Caco-2 (cell line): ENCODE measurements at regions of chr6 and their contacts with region 1.

Region 1: GRCh38 chr6:125314019-125314581 is 12.3 kb upstream of the HDDC2 start:
- DNase-seq: peak; percentile 50 to 59
- H3K4me3 ChIP-seq: no peak overlapping the region
- H3K4me3 Mint-ChIP-seq: no peak overlapping the region
- H3K27ac Mint-ChIP-seq: no peak overlapping the region
- H3K4me1 ChIP-seq: 0 out of 2 replicates have a peak, but pooled peaks cover 5% of the 10 kb centered on the region
- H3K4me1 Mint-ChIP-seq: no peaks in the 10 kb centered on the region
- H3K27me3 ChIP-seq: no peaks in the 10 kb centered on the region
- H3K27me3 Mint-ChIP-seq: peaks cover 3% of the 10 kb centered on the region
- CTCF ChIP-seq: peak; percentile 68 to 86

Region 2: DNA sequence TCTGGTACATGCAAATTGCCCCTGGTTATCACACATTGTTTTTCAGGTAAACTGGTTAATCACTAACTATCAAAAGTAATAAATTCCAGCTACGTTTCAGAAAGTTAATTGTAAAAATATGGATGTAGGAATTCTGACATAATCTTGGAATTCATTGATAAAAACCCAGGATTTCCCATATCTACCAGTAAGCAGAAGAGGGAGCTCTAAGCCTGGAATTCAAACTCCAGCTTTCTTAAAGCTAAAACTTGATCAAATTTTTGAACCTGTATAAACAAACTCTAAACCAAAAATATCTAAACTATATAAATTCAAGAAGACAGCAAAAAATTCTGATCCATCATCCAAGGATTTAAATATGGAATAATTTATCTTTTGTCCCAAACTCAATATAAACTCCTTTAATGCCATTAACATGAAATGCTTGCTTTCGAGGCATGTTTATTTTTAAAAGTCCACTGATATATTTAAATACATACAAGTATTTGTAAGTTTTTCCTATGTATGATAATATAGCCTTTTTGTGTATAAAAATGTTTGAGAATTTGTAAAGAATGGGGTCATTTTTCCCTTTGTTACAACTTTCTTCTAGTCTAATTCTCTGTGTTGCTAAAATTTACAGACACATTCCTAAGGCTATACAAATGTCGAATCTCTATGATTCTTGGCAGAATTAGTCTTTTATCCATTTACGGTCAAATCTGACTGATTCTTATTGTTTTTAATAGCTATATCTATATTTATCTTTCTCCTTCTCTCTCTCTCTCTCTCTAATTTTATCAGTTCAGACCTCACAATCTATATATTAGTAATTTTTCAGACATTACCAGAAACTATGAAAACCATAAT is 443.3 kb before region 1 on chr6:
- CTCF ChIA-PET with region 1: no interaction called
- POLR2A ChIA-PET with region 1: no interaction called
- intact Hi-C with region 1: loop called (anchors 5 kb)
- DNase-seq: peak in 1 of 2 experiments; percentile 3
- H3K4me3 ChIP-seq: no peak overlapping the region
- H3K4me3 Mint-ChIP-seq: no peak overlapping the region
- H3K27ac Mint-ChIP-seq: no peak overlapping the region
- H3K4me1 ChIP-seq: no peaks in the 10 kb centered on the region
- H3K4me1 Mint-ChIP-seq: no peaks in the 10 kb centered on the region
- H3K27me3 ChIP-seq: no peaks in the 10 kb centered on the region
- H3K27me3 Mint-ChIP-seq: peaks cover 4% of the 10 kb centered on the region
- CTCF ChIP-seq: peak; percentile 50 to 54

Region 3: DNA sequence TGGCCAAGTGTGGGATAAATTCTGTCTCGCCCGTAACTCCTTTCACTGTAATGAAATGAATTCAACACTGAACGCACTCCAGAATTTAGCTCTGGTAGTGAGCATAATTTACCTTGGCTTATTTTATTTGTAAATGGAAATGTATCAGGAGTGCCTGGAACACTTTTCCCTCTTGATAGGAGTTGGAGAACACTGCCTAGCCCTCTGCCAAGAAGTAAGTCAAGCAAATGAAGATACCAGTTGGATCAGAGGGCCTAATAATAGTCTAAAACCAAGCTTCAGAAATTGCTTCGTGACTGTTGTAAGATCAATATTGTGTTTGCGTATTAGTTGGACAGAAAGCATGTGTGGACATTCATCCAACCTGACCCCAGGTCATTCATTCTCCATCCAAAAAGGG is 225.1 kb before region 1 on chr6:
- CTCF ChIA-PET with region 1: no interaction called
- POLR2A ChIA-PET with region 1: no interaction called
- intact Hi-C with region 1: no loop called
- DNase-seq: no peak
- H3K4me3 ChIP-seq: no peak overlapping the region
- H3K4me3 Mint-ChIP-seq: no peak overlapping the region
- H3K27ac Mint-ChIP-seq: no peak overlapping the region
- H3K4me1 ChIP-seq: no peaks in the 10 kb centered on the region
- H3K4me1 Mint-ChIP-seq: no peaks in the 10 kb centered on the region
- H3K27me3 ChIP-seq: no peaks in the 10 kb centered on the region
- H3K27me3 Mint-ChIP-seq: peaks cover 10% of the 10 kb centered on the region
- CTCF ChIP-seq: no peak

Region 4: DNA sequence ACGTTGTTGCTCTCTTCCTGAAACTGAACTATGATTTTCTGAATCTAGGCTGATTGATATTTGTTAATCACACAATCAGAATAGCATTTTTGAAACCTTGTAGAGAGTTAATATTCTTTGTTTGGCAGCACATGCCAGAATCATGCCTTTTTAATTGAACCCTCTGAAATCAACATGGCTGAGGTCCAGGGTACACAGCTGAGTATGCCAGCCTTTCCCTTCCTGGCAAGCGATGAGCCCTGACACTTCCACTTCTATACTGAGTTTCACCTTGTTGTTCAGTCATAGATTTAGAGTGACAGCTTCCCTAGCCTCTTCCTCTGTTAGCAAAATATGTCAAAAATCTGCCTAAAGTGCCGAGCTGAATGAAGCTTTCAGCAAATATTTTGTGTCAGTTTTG is 19.2 kb before region 1 on chr6:
- CTCF ChIA-PET with region 1: no interaction called
- POLR2A ChIA-PET with region 1: no interaction called
- intact Hi-C with region 1: no loop called
- DNase-seq: no peak
- H3K4me3 ChIP-seq: no peak overlapping the region
- H3K4me3 Mint-ChIP-seq: no peak overlapping the region
- H3K27ac Mint-ChIP-seq: no peak overlapping the region
- H3K4me1 ChIP-seq: 0 out of 2 replicates have a peak, but pooled peaks cover under 1% of the 10 kb centered on the region
- H3K4me1 Mint-ChIP-seq: peaks cover 5% of the 10 kb centered on the region
- H3K27me3 ChIP-seq: no peaks in the 10 kb centered on the region
- H3K27me3 Mint-ChIP-seq: no peaks in the 10 kb centered on the region
- CTCF ChIP-seq: no peak

Region 5: GRCh38 chr6:125512621-125513020 is 198.5 kb after region 1 on chr6:
- CTCF ChIA-PET with region 1: no interaction called
- POLR2A ChIA-PET with region 1: no interaction called
- intact Hi-C with region 1: loop called (anchors 5 kb)
- DNase-seq: no peak
- H3K4me3 ChIP-seq: no peak overlapping the region
- H3K4me3 Mint-ChIP-seq: no peak overlapping the region
- H3K27ac Mint-ChIP-seq: no peak overlapping the region
- H3K4me1 ChIP-seq: no peaks in the 10 kb centered on the region
- H3K4me1 Mint-ChIP-seq: no peaks in the 10 kb centered on the region
- H3K27me3 ChIP-seq: no peaks in the 10 kb centered on the region
- H3K27me3 Mint-ChIP-seq: peaks cover 7% of the 10 kb centered on the region
- CTCF ChIP-seq: no peak

Region 6: DNA sequence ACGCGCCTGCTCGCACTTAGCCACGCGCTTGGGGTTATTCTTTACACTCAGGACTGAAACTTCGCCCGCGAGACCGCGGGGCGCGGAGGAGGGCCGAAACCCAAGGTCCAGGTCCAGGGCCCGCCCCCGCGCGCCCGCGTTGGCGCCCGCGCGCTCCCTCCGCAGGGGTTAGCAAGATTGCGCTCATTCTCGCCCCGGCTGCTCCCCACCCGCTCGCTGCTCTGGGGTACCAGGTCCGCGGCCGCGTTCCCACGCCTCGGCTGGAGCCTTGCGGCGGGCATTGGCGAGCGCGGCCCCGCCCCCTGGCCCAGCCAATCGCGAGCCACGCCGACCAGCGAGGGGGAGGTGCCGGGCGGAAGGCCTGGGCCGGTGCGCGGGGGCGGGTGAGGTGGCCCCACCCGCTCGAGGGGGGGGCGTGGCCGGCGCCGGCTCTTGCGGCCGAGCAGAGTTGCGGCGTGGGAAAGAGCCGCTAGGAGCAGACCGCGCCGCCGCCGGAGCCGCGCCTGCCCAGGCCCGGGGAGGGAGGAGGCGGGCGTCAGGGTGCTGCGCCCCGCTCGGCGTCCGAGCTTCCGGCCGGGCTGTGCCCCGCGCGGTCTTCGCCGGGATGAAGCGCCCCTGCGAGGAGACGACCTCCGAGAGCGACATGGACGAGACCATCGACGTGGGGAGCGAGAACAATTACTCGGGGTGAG is 435.2 kb after region 1 on chr6 and contains the start of gene HEY2:
- CTCF ChIA-PET with region 1: interaction called, 14 read pairs
- POLR2A ChIA-PET with region 1: no interaction called
- intact Hi-C with region 1: loop called (anchors 1 kb)
- DNase-seq: peak; percentile 86 to 96
- H3K4me3 ChIP-seq: peak within 1 kb of the TSS; percentile 48
- H3K4me3 Mint-ChIP-seq: peak within 1 kb of the TSS; percentile 93
- H3K27ac Mint-ChIP-seq: no peak within 1 kb of the TSS
- H3K4me1 ChIP-seq: peaks cover 11% of the 10 kb centered on the region; the same call in 1 of the 2 replicates
- H3K4me1 Mint-ChIP-seq: peaks cover 22% of the 10 kb centered on the region
- H3K27me3 ChIP-seq: no peaks in the 10 kb centered on the region; the same call in none of the 2 replicates
- H3K27me3 Mint-ChIP-seq: peaks cover 33% of the 10 kb centered on the region
- CTCF ChIP-seq: no peak
- total RNA-seq, gene HEY2: 0.12 TPM in 1 of 2 replicates, not detected in the other

Region 7: DNA sequence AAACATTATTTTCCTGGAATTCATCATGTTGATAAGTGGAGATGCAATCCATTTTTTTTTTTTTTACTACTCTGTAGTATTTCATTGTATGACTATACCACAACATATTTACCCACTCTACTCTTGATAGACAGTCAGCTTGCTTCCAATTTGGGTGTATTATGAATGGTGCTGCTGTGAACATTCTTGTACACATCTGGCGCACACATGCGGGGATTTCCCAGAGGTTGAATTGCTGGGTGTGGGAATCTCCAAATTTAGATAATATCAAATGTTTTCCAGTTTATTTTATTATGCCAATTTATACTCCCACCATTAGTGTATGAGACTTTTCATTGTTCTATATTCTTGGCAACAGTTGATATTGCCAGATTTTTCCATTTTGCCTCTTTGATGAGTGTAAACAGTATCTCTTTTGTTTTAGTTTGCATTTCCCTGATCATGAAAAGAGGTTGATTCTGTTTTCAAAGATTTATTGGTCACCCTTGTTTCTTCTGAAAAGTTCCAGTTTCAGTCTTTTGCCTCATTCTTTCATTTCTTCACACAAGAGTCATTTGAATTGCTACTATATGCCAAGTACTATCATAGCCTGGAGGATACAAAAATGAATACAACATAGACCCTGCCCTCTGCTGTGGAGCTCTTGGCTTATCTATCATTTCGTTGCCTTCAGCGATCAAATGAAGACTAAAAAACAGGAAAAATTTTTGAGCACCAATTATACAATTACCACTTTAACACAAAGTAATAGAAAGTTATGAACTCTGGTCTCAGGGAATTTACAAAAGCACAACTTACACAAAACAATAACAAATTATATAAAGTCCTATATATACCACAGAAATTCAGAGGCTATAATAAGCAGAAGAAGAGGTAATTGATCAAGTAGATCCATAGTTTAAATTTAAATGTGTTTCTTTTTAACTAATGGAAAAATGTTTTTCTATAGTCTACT is 459.6 kb after region 1 on chr6:
- CTCF ChIA-PET with region 1: interaction called, 5 read pairs
- POLR2A ChIA-PET with region 1: no interaction called
- intact Hi-C with region 1: loop called (anchors 1 kb)
- DNase-seq: no peak
- H3K4me3 ChIP-seq: no peak overlapping the region
- H3K4me3 Mint-ChIP-seq: no peak overlapping the region
- H3K27ac Mint-ChIP-seq: no peak overlapping the region
- H3K4me1 ChIP-seq: peaks cover 10% of the 10 kb centered on the region
- H3K4me1 Mint-ChIP-seq: peaks cover 14% of the 10 kb centered on the region
- H3K27me3 ChIP-seq: no peaks in the 10 kb centered on the region
- H3K27me3 Mint-ChIP-seq: peaks cover 3% of the 10 kb centered on the region
- CTCF ChIP-seq: no peak

Region 8: DNA sequence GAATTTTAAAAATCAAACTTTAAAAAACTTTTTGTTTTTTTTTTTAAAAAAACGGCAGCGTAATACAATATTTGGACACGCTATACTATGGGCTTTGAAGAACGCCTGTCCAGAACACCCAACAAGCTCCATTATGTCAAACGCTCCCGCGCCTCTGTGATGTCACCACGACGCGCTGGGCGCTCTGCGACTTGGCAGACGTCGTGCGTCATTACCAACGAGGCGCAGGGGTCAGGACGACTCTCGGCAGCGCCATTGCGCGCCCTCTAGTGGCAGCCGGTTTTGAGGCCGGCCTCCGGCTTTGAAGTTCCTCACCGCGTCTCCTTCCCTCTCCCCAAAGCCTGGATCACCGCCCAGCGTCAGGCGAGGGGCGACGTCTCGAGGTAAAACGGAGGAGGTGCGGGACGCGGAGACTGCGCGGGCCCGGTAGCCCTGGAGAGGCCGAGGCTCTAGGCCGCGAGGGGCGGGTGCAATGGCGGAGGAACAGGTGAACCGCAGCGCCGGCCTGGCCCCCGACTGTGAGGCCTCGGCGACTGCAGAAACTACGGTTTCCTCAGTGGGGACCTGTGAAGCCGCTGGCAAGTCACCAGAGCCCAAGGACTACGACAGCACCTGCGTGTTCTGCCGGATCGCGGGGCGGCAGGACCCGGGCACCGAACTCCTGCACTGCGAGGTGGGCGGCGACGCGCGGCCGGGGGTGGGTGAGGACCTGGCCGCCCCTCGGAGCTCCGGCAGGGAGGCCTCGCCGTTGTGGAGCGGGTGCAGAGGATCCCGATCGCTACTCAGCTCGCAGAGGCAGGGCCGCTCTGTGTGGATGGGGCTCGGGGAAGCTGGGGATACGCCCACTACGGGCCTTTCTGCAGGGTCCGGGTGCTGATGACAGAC is 642.6 kb after region 1 on chr6 and contains the start of gene HINT3:
- CTCF ChIA-PET with region 1: no interaction called
- POLR2A ChIA-PET with region 1: no interaction called
- intact Hi-C with region 1: loop called (anchors 5 kb)
- DNase-seq: peak; percentile 96 to 98
- H3K4me3 ChIP-seq: peak within 1 kb of the TSS; percentile 99
- H3K4me3 Mint-ChIP-seq: no peak within 1 kb of the TSS
- H3K27ac Mint-ChIP-seq: peak within 1 kb of the TSS; percentile 59
- H3K4me1 ChIP-seq: peaks cover 7% of the 10 kb centered on the region
- H3K4me1 Mint-ChIP-seq: peaks cover 14% of the 10 kb centered on the region
- H3K27me3 ChIP-seq: no peaks in the 10 kb centered on the region
- H3K27me3 Mint-ChIP-seq: no peaks in the 10 kb centered on the region
- CTCF ChIP-seq: peak; percentile 93 to 95
- total RNA-seq, gene HINT3: 20.2 and 24.6 TPM in 2 replicates